ENCODE measurements at regions of chr15 and their contacts with region 1.

Region 1: GRCh38 chr15:40323239-40323952 is at the start of gene INAFM2:
- DNase-seq: peak; percentile 88
- H3K4me3 Mint-ChIP-seq: peak within 1 kb of the TSS; percentile 65
- H3K27ac Mint-ChIP-seq: no peak within 1 kb of the TSS
- H3K4me1 Mint-ChIP-seq: peaks cover 18% of the 10 kb centered on the region
- H3K27me3 Mint-ChIP-seq: no peaks in the 10 kb centered on the region
- total RNA-seq, gene INAFM2: 6.7 to 7.4 TPM

Region 2: DNA sequence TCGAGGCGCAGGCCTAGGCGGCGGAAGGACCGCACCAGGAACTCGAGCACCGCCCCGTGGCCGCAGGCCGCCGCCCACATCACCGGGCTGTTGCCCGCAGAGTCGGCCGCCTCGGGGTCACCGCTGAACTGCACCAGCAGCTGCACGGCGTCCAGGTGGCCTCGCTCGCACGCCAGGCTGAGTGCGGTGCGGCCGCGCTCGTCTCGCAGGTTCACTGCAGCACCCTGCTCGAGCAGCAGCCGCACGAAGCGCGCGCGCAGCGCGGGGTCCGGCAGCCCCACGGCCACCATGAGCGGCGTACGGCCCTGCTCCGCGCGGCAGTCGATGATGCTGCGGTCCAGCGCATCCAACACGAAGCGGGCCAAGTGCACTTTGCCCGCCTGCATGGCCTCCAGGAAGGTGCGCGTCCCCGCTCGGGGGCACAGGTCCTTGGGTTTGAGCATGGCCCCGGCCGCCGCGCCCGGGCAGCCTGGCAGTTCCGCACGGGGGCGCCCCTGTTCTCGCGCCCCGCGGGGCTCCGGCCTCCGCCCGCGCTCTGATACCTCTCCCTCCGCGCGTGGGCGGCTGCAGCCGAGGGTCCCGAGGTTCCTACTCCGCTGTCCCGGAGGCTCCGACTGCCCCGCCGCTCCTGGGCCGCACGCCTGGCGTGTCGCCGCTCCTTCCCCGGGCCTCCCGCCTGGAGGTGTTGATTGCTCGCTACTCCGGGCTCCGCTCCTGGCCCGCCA is 41.1 kb before region 1 on chr15:
- CTCF ChIA-PET with region 1: interaction called, 500 read pairs
- POLR2A ChIA-PET with region 1: no interaction called
- intact Hi-C with region 1: loop called (anchors 5 kb)
- DNase-seq: peak; percentile 57
- H3K4me3 Mint-ChIP-seq: peak overlapping the region; percentile 26
- H3K27ac Mint-ChIP-seq: no peak overlapping the region
- H3K4me1 Mint-ChIP-seq: peaks cover 9% of the 10 kb centered on the region
- H3K27me3 Mint-ChIP-seq: peaks cover 30% of the 10 kb centered on the region

Region 3: DNA sequence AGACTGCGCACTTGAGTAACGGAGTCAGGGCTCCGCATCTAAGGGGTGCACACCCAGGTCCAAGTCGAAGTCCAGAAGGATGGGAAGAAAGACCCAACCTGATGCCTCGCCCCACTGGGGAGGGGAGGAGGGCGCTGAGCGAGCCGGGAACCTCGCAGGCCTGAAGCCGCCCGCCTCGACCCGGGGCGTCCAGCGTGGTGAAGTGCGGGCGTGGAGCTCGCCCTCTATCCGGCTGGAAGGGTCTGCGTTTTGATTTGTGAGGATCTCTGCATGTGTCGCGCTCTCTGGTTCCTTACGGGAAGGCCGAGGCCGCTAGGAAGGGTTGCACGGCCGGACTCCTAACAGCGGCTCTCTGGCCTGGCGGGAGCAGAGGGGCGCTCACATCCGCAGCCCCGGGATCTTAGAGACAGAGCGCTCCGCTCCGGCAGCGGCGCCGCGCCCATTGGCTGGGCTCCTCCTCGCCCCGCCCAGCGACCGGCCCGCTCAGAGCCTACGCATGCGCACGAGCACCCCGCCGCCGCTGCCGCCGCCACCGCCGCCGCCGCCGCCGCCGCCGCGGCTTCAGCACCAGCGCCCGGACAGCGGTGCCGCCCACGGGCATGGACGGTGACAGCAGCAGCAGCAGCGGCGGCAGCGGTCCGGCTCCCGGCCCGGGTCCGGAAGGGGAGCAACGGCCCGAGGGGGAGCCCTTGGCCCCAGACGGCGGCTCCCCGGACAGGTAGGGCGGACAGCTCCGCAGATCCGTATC is 34.5 kb after region 1 on chr15 and contains the start of gene DISP2:
- CTCF ChIA-PET with region 1: interaction called, 5 read pairs
- POLR2A ChIA-PET with region 1: no interaction called
- intact Hi-C with region 1: loop called (anchors 5 kb)
- DNase-seq: peak; percentile 94
- H3K4me3 Mint-ChIP-seq: peak within 1 kb of the TSS; percentile 74
- H3K27ac Mint-ChIP-seq: no peak within 1 kb of the TSS
- H3K4me1 Mint-ChIP-seq: peaks cover 5% of the 10 kb centered on the region
- H3K27me3 Mint-ChIP-seq: no peaks in the 10 kb centered on the region
- total RNA-seq, gene DISP2: 0.02 to 0.05 TPM

Region 4: GRCh38 chr15:40421246-40422157 is 98.1 kb after region 1 on chr15:
- CTCF ChIA-PET with region 1: interaction called, 12 read pairs
- POLR2A ChIA-PET with region 1: no interaction called
- intact Hi-C with region 1: no loop called
- DNase-seq: peak; percentile 87
- H3K4me3 Mint-ChIP-seq: no peak overlapping the region
- H3K27ac Mint-ChIP-seq: no peak overlapping the region
- H3K4me1 Mint-ChIP-seq: no peaks in the 10 kb centered on the region
- H3K27me3 Mint-ChIP-seq: no peaks in the 10 kb centered on the region